Kidney (tissue), 22 donors: ENCODE measurements at regions of chr3 and their contacts with region 1.

Region 1: DNA sequence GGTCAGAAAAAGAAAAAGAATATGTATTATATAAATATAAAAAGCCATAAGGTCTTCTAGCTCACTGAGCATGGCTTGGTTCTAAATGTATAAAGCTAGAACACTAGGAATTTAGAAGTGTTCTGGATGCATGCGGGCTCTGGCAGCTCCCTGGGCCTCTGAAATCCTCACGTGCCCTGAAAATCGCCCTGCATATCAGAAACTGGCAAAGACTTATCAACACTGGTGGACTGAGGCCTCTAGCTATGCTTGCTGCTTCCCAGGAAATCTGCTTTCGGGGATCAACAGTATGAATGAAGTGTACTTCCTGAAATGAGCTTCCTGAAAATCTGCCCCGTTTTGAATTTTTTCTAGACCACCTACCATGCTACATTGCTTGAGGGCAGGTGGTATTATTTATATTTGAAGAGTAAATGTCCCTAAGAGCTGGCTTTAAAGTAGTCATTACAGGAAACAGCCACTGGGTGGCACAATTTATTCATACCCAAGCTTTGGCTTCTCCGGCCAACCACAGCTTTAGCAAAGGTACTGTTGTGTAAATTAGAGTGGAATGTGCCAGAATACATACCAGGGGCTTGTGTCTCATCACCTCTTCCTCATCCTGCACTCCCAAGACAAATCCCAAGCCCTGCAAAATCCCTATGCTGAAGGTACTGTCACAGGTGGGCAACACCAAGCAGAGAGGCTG is 17.7 kb downstream of the CRTAP start:
- DNase-seq: peak in 4 of 5 donors; percentile 56 to 82 (median 72)
- H3K4me3 ChIP-seq: no peak overlapping the region
- H3K27ac ChIP-seq: no peak overlapping the region
- H3K4me1 ChIP-seq: no peaks in the 10 kb centered on the region
- H3K27me3 ChIP-seq: no peaks in the 10 kb centered on the region
- CTCF ChIP-seq: peak; percentile 63

Region 2: GRCh38 chr3:33006081-33006480 is 125.4 kb before region 1 on chr3:
- intact Hi-C with region 1: no loop called
- DNase-seq: no peak
- H3K4me3 ChIP-seq: no peak overlapping the region
- H3K27ac ChIP-seq: no peak overlapping the region
- H3K4me1 ChIP-seq: no peaks in the 10 kb centered on the region
- H3K27me3 ChIP-seq: no peaks in the 10 kb centered on the region
- CTCF ChIP-seq: no peak

Region 3: DNA sequence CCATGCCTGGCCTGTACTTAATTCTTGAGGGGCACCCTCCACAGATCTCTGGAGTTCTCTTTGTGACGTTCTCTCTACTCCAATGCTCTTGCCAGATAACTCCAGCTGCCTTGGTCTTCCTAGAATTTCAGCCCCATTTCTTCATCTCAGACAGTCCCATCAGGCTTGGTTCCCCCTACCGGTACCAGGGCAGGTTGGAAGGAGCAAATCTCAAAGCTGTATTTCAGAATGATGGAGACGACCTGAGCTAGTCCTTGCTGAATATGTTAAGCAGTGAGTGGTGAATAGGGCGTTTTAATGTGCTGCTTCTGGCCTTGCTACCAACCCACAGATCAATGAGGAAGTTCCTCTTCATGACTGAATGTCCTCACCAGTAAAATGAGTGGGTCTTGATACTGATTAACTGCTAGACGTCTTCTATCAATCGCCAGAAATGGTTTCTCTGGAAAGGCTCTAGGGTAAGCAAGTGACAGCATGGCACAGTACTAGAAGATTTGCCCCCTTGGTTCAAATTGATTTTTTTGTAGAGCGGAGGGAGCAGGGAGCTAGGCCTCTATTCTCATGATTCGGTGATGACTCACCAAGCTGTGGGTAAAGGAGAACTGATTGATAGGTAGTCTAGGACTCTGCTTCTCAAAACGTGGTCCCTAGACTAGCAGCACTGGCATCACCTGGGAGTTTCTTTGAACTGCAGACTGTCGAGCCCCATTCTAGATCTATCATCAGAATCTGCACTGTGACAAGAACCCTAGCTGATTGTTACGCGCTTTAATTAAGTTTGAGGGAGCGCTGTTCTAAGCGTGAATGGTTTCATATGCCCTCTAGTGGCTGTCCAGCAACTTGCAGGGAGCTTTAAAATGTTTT is 241.0 kb after region 1 on chr3:
- intact Hi-C with region 1: loop called (anchors 5 kb)
- DNase-seq: peak in 4 of 5 donors; percentile 45 to 70 (median 56)
- H3K4me3 ChIP-seq: no peak overlapping the region
- H3K27ac ChIP-seq: no peak overlapping the region
- H3K4me1 ChIP-seq: no peaks in the 10 kb centered on the region
- H3K27me3 ChIP-seq: no peaks in the 10 kb centered on the region
- CTCF ChIP-seq: peak; percentile 92